ENCODE measurements at regions of chr12 and their contacts with region 1.

Region 1: GRCh38 chr12:122097927-122098756 is 19.6 kb downstream of the MLXIP start:
- DNase-seq: peak; percentile 64
- H3K4me3 ChIP-seq: no peak overlapping the region
- H3K27ac ChIP-seq: peak overlapping the region; percentile 85
- H3K4me1 ChIP-seq: peaks cover 53% of the 10 kb centered on the region
- H3K27me3 ChIP-seq: no peaks in the 10 kb centered on the region
- CTCF ChIP-seq: no peak

Region 2: GRCh38 chr12:121992059-121992879 is 105.9 kb before region 1 on chr12:
- CTCF ChIA-PET with region 1: no interaction called
- dilution Hi-C with region 1: loop called (anchors 5 kb)
- in situ Hi-C with region 1: no loop called
- intact Hi-C with region 1: no loop called
- DNase-seq: peak; percentile 100
- H3K4me3 ChIP-seq: no peak overlapping the region
- H3K27ac ChIP-seq: peak overlapping the region; percentile 74
- H3K4me1 ChIP-seq: peaks cover 26% of the 10 kb centered on the region
- H3K27me3 ChIP-seq: no peaks in the 10 kb centered on the region
- CTCF ChIP-seq: no peak

Region 3: DNA sequence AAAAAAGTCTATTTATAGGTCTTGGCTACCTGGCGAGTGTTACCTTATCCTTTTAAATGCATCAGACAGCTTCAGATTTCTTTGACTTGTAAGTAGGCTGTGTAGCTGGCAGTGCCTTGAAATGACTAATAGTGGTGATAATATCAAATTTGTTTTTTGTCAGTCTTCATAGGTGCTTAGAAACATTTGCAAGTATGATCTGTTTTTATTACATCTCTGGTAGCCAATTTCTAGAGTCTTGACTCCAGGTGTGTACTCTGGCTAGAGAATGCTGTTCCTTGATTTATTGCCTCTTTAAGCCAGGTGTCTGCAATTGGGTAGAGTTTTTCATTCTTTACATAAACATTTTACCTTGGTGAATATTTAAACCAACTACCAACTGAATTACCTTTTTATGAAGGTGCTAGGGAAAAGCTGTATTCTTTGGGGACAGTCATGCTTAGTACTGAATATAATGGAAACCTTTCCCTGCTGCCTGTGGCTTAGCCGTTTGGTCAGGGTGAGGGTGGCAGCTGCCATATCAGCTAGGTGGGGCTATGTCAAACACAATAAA is 13.0 kb after region 1 on chr12:
- CTCF ChIA-PET with region 1: no interaction called
- dilution Hi-C with region 1: no loop called
- in situ Hi-C with region 1: no loop called
- intact Hi-C with region 1: loop called (anchors 1 kb)
- DNase-seq: peak; percentile 86
- H3K4me3 ChIP-seq: no peak overlapping the region
- H3K27ac ChIP-seq: peak overlapping the region; percentile 63
- H3K4me1 ChIP-seq: peaks cover 34% of the 10 kb centered on the region
- H3K27me3 ChIP-seq: no peaks in the 10 kb centered on the region
- CTCF ChIP-seq: no peak

Region 4: GRCh38 chr12:122123051-122123760 is 25.1 kb after region 1 on chr12:
- CTCF ChIA-PET with region 1: no interaction called
- dilution Hi-C with region 1: no loop called
- in situ Hi-C with region 1: no loop called
- intact Hi-C with region 1: no loop called
- DNase-seq: peak; percentile 65
- H3K4me3 ChIP-seq: no peak overlapping the region
- H3K27ac ChIP-seq: no peak overlapping the region
- H3K4me1 ChIP-seq: peaks cover 9% of the 10 kb centered on the region
- H3K27me3 ChIP-seq: no peaks in the 10 kb centered on the region
- CTCF ChIP-seq: peak; percentile 52 to 71